ENCODE measurements at regions of chr10 and their contacts with region 1.

Region 1: DNA sequence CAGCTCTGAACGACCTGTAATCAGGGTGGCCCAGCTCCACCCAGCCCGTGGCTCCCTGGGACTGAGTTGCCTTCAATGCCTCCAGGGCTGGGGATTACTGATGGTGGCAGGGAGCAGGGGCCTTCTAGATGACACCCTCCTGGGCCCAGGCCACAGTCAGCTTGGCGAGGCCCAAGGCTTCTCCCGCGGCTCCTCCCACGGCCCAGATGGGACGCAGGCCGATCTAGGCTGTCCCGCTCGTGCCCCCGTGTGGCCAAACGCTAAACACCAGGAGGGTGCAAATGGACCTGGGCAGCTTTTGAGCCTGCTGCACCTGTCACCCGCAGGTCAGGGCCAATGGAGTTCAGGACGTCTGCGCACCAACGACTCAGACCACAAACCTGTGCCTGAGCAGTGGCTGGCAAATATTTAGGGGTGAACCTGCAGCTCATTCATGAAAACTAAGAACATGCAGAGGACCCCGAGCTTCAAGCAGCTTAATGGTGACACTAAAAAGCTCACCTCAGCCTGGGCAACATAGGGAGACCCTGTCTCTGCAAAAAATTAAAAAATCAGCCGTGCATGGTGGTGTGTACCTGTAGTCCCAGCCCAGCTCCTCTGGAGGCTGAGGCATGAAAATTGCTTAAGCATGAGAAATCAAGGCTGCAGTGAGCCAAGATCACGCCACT is 43.2 kb downstream of the ASB13 start:
- DNase-seq: peak; percentile 89
- H3K4me3 Mint-ChIP-seq: no peak overlapping the region
- H3K27ac Mint-ChIP-seq: no peak overlapping the region
- H3K4me1 Mint-ChIP-seq: peaks cover 10% of the 10 kb centered on the region
- H3K27me3 Mint-ChIP-seq: no peaks in the 10 kb centered on the region
- CTCF ChIP-seq: peak; percentile 88

Region 2: DNA sequence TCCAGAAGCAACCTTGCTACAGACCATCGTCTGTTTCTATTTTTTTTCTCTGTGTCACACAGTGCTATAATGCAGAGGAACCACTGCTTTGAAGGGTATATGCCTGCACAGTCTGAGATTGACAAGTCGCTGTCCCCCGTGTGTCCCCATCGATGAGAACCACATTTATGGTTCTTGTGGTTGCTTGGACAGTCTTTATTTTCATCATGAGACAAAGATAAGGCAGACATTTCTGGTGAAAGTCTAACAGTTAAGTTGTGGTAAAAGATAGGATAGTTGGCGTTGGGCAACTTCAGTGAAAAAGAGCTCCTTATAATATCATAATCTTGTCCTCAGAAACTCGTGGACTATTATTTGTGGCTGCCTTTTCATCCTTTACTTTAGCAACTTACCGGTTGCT is 803.5 kb before region 1 on chr10:
- CTCF ChIA-PET with region 1: interaction called, 12 read pairs
- POLR2A ChIA-PET with region 1: interaction called, 3 read pairs
- intact Hi-C with region 1: loop called (anchors 5 kb)
- DNase-seq: no peak
- H3K4me3 Mint-ChIP-seq: no peak overlapping the region
- H3K27ac Mint-ChIP-seq: no peak overlapping the region
- H3K4me1 Mint-ChIP-seq: no peaks in the 10 kb centered on the region
- H3K27me3 Mint-ChIP-seq: no peaks in the 10 kb centered on the region
- CTCF ChIP-seq: no peak

Region 3: GRCh38 chr10:5446390-5446926 is 176.8 kb before region 1 on chr10:
- CTCF ChIA-PET with region 1: interaction called, 264 read pairs
- POLR2A ChIA-PET with region 1: interaction called, 121 read pairs
- intact Hi-C with region 1: loop called (anchors 1 kb)
- DNase-seq: peak; percentile 79
- H3K4me3 Mint-ChIP-seq: peak overlapping the region; percentile 81
- H3K27ac Mint-ChIP-seq: peak overlapping the region; percentile 89
- H3K4me1 Mint-ChIP-seq: peaks cover 24% of the 10 kb centered on the region
- H3K27me3 Mint-ChIP-seq: no peaks in the 10 kb centered on the region
- CTCF ChIP-seq: no peak

Region 4: DNA sequence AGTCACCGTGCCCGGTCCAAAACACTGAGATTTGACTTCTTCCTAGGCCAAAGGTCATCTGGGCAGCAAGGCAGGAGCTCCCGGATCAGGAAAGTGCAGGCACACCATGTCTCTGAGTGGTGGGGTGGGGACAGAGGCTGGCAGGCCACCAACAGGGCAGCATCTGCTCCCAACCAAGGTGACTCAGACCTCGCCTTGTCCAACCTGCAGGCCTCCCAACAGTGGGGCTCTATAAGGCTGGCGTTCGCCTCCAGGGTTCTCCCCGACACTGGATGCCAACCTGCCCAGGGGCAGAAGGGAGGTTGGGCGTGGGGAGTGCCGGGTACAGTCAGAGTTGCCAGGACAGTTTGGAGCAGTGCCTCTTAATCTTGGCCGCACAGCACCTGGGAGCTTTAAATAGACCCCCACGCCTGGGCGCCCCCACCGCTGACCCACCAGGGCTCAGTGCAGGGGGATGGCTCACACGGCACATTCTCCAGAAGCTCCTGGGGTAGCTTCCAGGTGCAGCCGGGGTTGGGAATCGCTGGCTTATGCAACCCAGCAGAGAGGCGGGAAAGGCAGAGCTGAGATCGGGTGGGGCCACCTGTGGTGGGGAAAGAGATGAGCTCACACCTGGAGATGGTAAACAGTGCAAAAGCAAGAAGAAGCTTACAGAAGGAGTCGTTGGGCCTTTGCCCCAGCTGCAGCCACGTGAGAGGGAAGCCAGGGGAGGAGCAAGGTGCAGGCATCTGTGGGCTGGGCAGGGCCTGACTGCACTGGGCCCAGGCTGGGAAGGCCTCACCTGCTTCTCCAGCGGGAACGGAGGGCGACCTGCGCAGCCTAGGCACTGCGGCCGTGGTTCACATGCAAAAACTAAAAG is 134.7 kb before region 1 on chr10:
- CTCF ChIA-PET with region 1: interaction called, 11 read pairs
- POLR2A ChIA-PET with region 1: interaction called, 12 read pairs
- intact Hi-C with region 1: loop called (anchors 1 kb)
- DNase-seq: peak; percentile 93
- H3K4me3 Mint-ChIP-seq: peak overlapping the region; percentile 57
- H3K27ac Mint-ChIP-seq: peak overlapping the region; percentile 94
- H3K4me1 Mint-ChIP-seq: peaks cover 14% of the 10 kb centered on the region
- H3K27me3 Mint-ChIP-seq: no peaks in the 10 kb centered on the region
- CTCF ChIP-seq: no peak

Region 5: GRCh38 chr10:5595591-5596590 is 27.3 kb before region 1 on chr10:
- CTCF ChIA-PET with region 1: interaction called, 6 read pairs
- POLR2A ChIA-PET with region 1: interaction called, 5 read pairs
- intact Hi-C with region 1: loop called (anchors 1 kb)
- DNase-seq: peak; percentile 95
- H3K4me3 Mint-ChIP-seq: peak overlapping the region; percentile 43
- H3K27ac Mint-ChIP-seq: peak overlapping the region; percentile 60
- H3K4me1 Mint-ChIP-seq: peaks cover 25% of the 10 kb centered on the region
- H3K27me3 Mint-ChIP-seq: no peaks in the 10 kb centered on the region
- CTCF ChIP-seq: no peak

Region 6: DNA sequence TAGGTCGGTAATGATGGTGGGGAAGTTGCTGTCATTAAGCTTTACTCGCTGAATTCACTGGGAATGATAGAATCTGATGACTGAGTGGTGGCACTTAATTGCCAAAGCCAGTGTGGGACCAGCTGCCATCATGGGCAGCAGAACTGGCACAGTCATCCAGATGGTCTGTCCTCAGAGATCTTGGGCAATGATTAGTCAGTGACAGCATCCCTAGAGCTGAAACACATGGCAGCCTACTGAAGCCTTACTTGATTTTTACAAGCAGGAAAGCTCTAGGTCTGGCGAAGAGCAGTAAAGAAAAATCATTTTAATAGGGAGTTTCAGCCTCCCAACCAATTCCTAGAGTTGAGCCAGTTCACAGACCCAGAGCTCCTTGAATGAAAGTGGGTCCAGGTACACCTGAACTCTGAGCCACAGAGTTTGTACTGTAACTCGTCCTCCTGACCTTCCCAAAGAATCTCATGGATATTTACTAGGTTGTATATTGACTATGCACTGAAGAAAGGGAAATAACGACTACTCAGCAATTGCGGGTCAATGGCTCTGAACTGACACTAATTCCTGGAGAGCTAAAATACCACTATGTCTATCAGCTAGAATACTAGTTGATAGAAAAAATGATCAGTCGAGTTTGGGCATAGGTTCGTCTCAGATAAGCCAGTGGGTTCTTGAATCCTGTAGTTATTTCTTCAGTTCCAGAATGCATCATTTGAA is 47.6 kb after region 1 on chr10:
- CTCF ChIA-PET with region 1: no interaction called
- POLR2A ChIA-PET with region 1: no interaction called
- intact Hi-C with region 1: no loop called
- DNase-seq: no peak
- H3K4me3 Mint-ChIP-seq: no peak overlapping the region
- H3K27ac Mint-ChIP-seq: no peak overlapping the region
- H3K4me1 Mint-ChIP-seq: no peaks in the 10 kb centered on the region
- H3K27me3 Mint-ChIP-seq: no peaks in the 10 kb centered on the region
- CTCF ChIP-seq: no peak

Region 7: GRCh38 chr10:5698062-5698461 is 74.8 kb after region 1 on chr10:
- CTCF ChIA-PET with region 1: no interaction called
- POLR2A ChIA-PET with region 1: no interaction called
- intact Hi-C with region 1: no loop called
- DNase-seq: no peak
- H3K4me3 Mint-ChIP-seq: no peak overlapping the region
- H3K27ac Mint-ChIP-seq: no peak overlapping the region
- H3K4me1 Mint-ChIP-seq: peaks cover 15% of the 10 kb centered on the region
- H3K27me3 Mint-ChIP-seq: no peaks in the 10 kb centered on the region
- CTCF ChIP-seq: no peak